ENCODE measurements at regions of chr19 and their contacts with region 1.

Region 1: DNA sequence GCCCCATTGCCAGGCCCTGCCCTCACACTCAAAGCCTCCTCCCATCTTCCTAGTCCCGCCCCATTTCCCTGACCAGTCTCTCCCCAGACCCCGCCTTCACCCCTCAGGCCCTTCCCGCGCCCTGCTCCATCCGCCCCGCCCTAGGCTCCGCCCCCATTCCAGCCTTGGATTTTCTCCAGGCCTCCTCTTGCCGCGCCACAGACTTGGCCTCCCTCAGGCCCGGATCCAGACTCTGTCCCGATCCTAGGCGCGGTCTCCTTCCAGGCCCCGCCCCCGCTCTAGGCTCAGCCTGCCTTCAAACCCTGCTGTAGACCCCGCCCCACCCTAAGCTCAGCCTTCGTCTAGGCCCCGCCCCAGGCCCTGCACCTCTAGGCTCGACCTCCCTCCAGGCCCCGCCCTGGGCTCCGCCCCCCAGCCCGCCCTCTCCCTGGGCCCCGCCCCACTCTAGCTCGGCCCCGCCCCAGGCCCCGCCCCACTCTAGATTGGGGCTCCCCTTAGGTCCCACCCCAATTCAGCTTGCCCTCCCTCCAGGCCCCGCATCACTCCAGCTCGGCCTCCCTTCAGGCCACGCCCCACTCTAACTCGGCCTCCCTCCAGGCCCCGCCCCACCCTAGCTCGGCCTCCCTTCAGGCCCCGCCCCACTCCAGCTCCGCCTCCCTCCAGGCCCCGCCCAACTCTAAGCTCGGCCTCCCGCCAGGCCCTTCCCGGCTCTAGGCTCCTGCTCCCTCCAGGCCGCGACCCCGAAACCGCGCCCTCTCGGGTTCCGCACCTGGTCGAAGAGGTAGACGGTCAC is 18.5 kb downstream of the LMTK3 start:
- DNase-seq: peak; percentile 91
- ATAC-seq: peak; percentile 74
- H3K4me3 Mint-ChIP-seq: peak overlapping the region; percentile 26
- H3K27ac Mint-ChIP-seq: peak overlapping the region; percentile 26
- H3K4me1 Mint-ChIP-seq: peaks cover 30% of the 10 kb centered on the region
- H3K27me3 Mint-ChIP-seq: peaks cover 51% of the 10 kb centered on the region

Region 2: GRCh38 chr19:48342841-48343540 is 150.1 kb before region 1 on chr19:
- CTCF ChIA-PET with region 1: no interaction called
- DNase-seq: no peak
- ATAC-seq: no peak
- H3K4me3 Mint-ChIP-seq: no peak overlapping the region
- H3K27ac Mint-ChIP-seq: no peak overlapping the region
- H3K4me1 Mint-ChIP-seq: no peaks in the 10 kb centered on the region
- H3K27me3 Mint-ChIP-seq: no peaks in the 10 kb centered on the region

Region 3: GRCh38 chr19:48473161-48473966 is 19.8 kb before region 1 on chr19:
- CTCF ChIA-PET with region 1: interaction called, 36 read pairs
- DNase-seq: no peak
- ATAC-seq: no peak
- H3K4me3 Mint-ChIP-seq: no peak overlapping the region
- H3K27ac Mint-ChIP-seq: no peak overlapping the region
- H3K4me1 Mint-ChIP-seq: peaks cover 16% of the 10 kb centered on the region
- H3K27me3 Mint-ChIP-seq: no peaks in the 10 kb centered on the region

Region 4: GRCh38 chr19:48506138-48506733 is 13.1 kb after region 1 on chr19:
- CTCF ChIA-PET with region 1: interaction called, 30 read pairs
- DNase-seq: no peak
- ATAC-seq: peak; percentile 24
- H3K4me3 Mint-ChIP-seq: no peak overlapping the region
- H3K27ac Mint-ChIP-seq: no peak overlapping the region
- H3K4me1 Mint-ChIP-seq: peaks cover 19% of the 10 kb centered on the region
- H3K27me3 Mint-ChIP-seq: peaks cover 2% of the 10 kb centered on the region

Region 5: GRCh38 chr19:48588670-48589399 is 95.7 kb after region 1 on chr19:
- CTCF ChIA-PET with region 1: interaction called, 72 read pairs
- DNase-seq: peak; percentile 90
- ATAC-seq: peak; percentile 96
- H3K4me3 Mint-ChIP-seq: peak overlapping the region; percentile 36
- H3K27ac Mint-ChIP-seq: no peak overlapping the region
- H3K4me1 Mint-ChIP-seq: peaks cover 15% of the 10 kb centered on the region
- H3K27me3 Mint-ChIP-seq: peaks cover 3% of the 10 kb centered on the region

Measured in activated CD8-positive, alpha-beta memory T cell treated with anti-CD3 and anti-CD28 coated beads, Interleukin-2, amount 10 ng/mL, durations not matched to agents 7 days and 5 days (primary cell).